Mucosa of descending colon (tissue), 3 donors: ENCODE measurements at regions of chr3 and their contacts with region 1.

Region 1: DNA sequence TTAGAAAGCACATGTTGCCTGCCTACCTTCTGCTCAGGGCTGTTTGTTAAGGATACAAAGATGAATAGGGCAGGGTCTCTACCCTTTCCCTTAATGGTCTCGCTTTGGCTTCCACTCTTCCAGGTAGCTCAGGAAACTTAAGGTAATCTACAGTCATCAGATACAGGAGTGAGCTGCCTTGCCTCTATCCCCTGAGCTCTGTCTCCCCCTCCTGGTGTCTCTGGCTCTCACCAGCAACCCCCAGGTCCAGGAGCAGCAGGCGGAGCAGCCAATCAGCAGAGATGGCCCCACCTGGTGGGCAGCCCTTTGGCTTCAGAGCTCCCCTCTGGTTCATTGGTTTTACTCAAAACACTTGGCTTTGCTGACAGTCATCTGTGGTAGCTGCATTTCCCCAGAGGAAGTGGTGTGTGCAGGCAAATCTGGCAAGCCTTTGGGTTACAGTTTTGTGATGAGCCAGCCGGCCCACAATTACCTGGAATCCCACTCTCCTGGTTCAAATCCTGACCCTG is 8.5 kb upstream of the CX3CR1 start:
- DNase-seq: peak; percentile 82 to 87 (median 83)
- ATAC-seq: peak; percentile 92
- H3K4me3 ChIP-seq: no peak overlapping the region
- H3K4me1 ChIP-seq: no peaks in the 10 kb centered on the region
- CTCF ChIP-seq: peak; percentile 56

Region 2: GRCh38 chr3:39126532-39127071 is 161.8 kb before region 1 on chr3:
- intact Hi-C with region 1: loop called (anchors 5 to 10 kb)
- DNase-seq: peak in 1 of 3 donors; percentile 80
- ATAC-seq: peak; percentile 59
- H3K4me3 ChIP-seq: no peak overlapping the region
- H3K4me1 ChIP-seq: peaks cover 8% of the 10 kb centered on the region
- CTCF ChIP-seq: peak; percentile 12

Region 3: GRCh38 chr3:39166134-39166731 is 122.1 kb before region 1 on chr3:
- intact Hi-C with region 1: no loop called
- DNase-seq: no peak
- ATAC-seq: peak; percentile 76
- H3K4me3 ChIP-seq: no peak overlapping the region
- H3K4me1 ChIP-seq: peaks cover 3% of the 10 kb centered on the region
- CTCF ChIP-seq: no peak

Region 4: DNA sequence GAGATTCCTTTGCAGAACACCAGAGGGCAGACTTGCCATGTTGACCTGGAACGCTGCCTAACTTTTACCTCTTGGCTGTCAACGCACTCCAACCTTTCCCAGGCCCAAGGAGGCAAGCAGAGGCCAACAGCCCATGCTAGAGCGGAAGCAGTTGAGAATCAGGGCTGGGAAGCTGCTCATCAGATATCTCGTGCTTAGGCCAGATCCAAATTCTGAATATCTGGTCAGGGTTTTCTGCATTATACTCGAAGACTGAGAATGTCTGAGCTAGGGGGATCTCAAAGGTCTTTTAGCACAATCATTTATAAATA is 98.4 kb before region 1 on chr3:
- intact Hi-C with region 1: loop called in 1 of 2 experiments (anchors 5 kb)
- DNase-seq: peak in 2 of 3 donors; percentile 64 to 71
- ATAC-seq: peak; percentile 88
- H3K4me3 ChIP-seq: no peak overlapping the region
- H3K4me1 ChIP-seq: no peaks in the 10 kb centered on the region
- CTCF ChIP-seq: peak; percentile 72

Region 5: GRCh38 chr3:39208463-39209055 is 79.8 kb before region 1 on chr3:
- intact Hi-C with region 1: loop called in 1 of 2 experiments (anchors 1 kb)
- DNase-seq: peak in 2 of 3 donors; percentile 61 to 78
- ATAC-seq: peak; percentile 92
- H3K4me3 ChIP-seq: no peak overlapping the region
- H3K4me1 ChIP-seq: no peaks in the 10 kb centered on the region
- CTCF ChIP-seq: peak; percentile 33

Region 6: GRCh38 chr3:39383045-39383880 is 94.9 kb after region 1 on chr3 and contains the start of gene SLC25A38:
- intact Hi-C with region 1: loop called in 1 of 2 experiments (anchors 10 kb)
- DNase-seq: peak; percentile 87 to 92 (median 88)
- ATAC-seq: peak; percentile 87
- H3K4me3 ChIP-seq: peak within 1 kb of the TSS; percentile 56
- H3K4me1 ChIP-seq: peaks cover 35% of the 10 kb centered on the region
- CTCF ChIP-seq: no peak
- total RNA-seq, gene SLC25A38: 29.3 to 35.3 (median 34.4) TPM

Region 7: GRCh38 chr3:39460677-39461076 is 172.3 kb after region 1 on chr3:
- intact Hi-C with region 1: no loop called
- DNase-seq: peak in 1 of 3 donors; percentile 25
- ATAC-seq: peak; percentile 81
- H3K4me3 ChIP-seq: no peak overlapping the region
- H3K4me1 ChIP-seq: no peaks in the 10 kb centered on the region
- CTCF ChIP-seq: no peak